BJ (cell line): ENCODE measurements at regions of chr15 and their contacts with region 1.

Region 1: GRCh38 chr15:75532413-75533147 is 46.5 kb downstream of the PTPN9 start:
- DNase-seq: peak; percentile 37
- H3K4me3 ChIP-seq: no peak overlapping the region
- H3K27me3 ChIP-seq: no peaks in the 10 kb centered on the region
- CTCF ChIP-seq: peak; percentile 43

Region 2: DNA sequence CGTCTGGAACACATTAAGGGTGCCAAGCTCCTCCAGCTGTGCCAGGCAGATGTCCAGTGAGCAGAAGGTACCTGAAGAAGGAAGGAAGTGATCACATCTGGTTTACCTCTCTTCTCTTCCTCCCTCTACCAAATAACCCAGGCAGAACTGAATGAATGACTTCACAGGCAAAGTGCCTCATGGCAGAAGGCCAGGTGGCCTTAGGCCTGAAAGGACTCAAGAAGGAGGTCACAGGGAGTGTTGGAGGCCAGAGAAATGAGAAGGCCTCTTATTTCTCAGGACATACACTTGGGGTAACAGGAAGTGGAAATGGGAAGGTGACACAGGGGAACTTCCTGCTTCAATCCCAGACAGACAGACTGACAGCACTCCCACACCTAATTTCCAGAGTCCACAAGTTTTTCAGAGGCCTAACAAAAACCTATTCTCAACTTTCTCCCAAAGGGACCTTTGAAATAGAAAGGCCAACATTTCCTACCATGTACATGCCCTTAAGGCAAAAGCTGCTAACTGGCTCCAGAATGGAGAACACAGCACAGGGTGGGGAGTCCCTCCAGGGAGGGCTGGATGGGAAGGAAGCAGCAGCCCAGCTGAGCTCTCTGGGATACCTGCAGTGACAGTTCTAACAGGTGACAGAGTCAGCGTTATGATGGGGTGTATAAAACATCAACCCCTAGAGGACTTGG is 63.5 kb before region 1 on chr15:
- CTCF ChIA-PET with region 1: interaction called, 3 read pairs
- POLR2A ChIA-PET with region 1: interaction called, 14 read pairs
- DNase-seq: no peak
- H3K4me3 ChIP-seq: no peak overlapping the region
- H3K27me3 ChIP-seq: no peaks in the 10 kb centered on the region
- CTCF ChIP-seq: no peak